Motor neuron (in vitro differentiated cells): ENCODE measurements at regions of chr16 and their contacts with region 1.

Region 1: DNA sequence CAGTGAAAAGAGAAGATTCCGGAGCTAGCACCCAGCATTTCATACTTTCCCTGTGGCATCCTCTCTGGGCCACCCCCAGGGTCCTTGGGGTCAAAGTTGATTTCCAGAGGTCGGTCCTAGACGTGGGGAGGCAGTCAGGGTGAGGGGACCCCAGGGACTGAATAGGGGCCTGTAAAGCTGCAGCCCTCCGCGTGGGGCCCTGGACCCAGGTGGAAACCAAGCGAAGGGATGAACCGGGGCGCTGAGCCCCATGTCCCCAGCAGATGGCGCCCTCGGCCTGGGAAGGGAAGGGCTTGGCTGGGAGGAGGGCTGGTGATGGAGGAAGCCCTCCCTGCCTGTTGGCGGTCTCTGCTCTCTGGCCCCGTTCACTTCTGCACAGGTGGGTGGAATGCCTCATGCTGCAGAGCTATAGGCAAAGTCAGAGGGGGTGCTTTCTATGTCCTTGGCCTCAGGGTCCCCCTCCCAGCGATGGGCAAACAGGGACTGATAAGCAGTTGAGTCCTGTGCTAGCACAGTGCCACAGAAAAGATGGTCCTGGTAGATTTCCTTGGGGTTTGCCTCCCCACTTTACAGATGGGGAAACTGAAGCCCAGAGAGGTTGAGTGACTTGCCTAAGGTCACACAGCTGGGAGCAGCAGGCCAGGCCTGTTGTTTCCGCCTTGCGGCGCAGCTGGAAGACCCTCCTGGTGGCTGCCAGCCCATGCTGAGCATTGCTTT is 163.4 kb upstream of the CIBAR2 start:
- ATAC-seq: peak; percentile 82 to 96 (median 85)
- H3K4me3 ChIP-seq: no peak overlapping the region
- H3K27ac ChIP-seq: no peak overlapping the region
- H3K4me1 ChIP-seq: peaks cover 47 to 51% of the 10 kb centered on the region in 2 donors

Region 2: GRCh38 chr16:85114909-85115567 is 160.7 kb before region 1 on chr16:
- in situ Hi-C with region 1: loop called in 1 of 9 experiments (anchors 25 kb)
- ATAC-seq: peak; percentile 50 to 95 (median 56)
- H3K4me3 ChIP-seq: no peak overlapping the region
- H3K27ac ChIP-seq: no peak overlapping the region
- H3K4me1 ChIP-seq: peaks cover 16 to 23% of the 10 kb centered on the region in 2 donors

Region 3: DNA sequence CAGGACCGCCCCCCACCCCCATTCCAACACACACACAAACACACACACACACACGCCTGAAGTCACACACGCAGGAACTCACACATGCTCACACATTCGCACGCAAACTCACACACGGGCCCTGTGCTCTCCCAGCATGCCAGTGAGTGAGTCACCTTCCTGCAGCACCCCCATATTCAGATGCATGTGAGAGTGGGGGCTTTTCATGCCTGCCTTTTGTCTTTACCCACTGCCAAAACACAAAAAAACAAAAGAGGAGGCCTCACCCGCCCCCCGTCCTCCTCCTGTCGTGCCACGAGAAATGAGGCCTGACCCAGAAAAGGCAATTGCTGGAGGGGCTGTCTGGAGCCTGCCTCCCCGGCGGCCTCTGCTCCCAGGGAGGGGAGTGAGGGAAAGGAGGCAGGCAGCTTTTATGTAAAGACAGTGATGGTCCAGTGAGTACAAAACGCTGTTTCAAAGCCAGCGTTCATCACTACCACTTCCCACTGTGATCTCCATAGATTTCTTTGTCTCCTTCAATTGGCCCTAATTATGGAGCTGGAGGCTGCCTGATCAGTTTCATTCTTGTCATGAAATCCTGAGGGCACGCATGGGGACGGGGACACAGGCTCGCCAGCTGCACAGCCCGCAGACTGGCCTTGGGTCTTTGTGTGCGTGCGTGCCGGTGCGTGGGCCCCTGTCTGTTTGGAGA is 307.9 kb after region 1 on chr16:
- in situ Hi-C with region 1: loop called in 1 of 9 experiments (anchors 25 kb)
- ATAC-seq: peak in 5 of 8 experiments; percentile 40 to 57 (median 49)
- H3K4me3 ChIP-seq: peak overlapping the region in 1 of 5 donors; percentile 16
- H3K27ac ChIP-seq: peak overlapping the region; percentile 91 to 92
- H3K4me1 ChIP-seq: peaks cover 97 to 100% of the 10 kb centered on the region in 2 donors

Region 4: GRCh38 chr16:85610508-85611332 is 335.0 kb after region 1 on chr16:
- in situ Hi-C with region 1: loop called in 3 of 9 experiments (anchors 25 kb)
- ATAC-seq: peak; percentile 13 to 57 (median 38)
- H3K4me3 ChIP-seq: peak overlapping the region; percentile 44 to 75 (median 61)
- H3K27ac ChIP-seq: peak overlapping the region; percentile 96 to 98
- H3K4me1 ChIP-seq: peaks cover 62 to 71% of the 10 kb centered on the region in 2 donors

Region 5: GRCh38 chr16:85717393-85718121 is 441.9 kb after region 1 on chr16:
- in situ Hi-C with region 1: loop called in 1 of 9 experiments (anchors 25 kb)
- ATAC-seq: peak; percentile 2 to 73 (median 20)
- H3K4me3 ChIP-seq: no peak overlapping the region
- H3K27ac ChIP-seq: no peak overlapping the region
- H3K4me1 ChIP-seq: peaks cover 42 to 58% of the 10 kb centered on the region in 2 donors